ENCODE measurements at regions of chr12 and their contacts with region 1.

Region 1: GRCh38 chr12:91722072-91722471 is 423.6 kb downstream of the BTG1 start:
- DNase-seq: no peak
- H3K4me3 Mint-ChIP-seq: no peak overlapping the region
- H3K27ac Mint-ChIP-seq: no peak overlapping the region
- H3K4me1 Mint-ChIP-seq: peaks cover 5% of the 10 kb centered on the region
- H3K27me3 Mint-ChIP-seq: no peaks in the 10 kb centered on the region

Region 2: GRCh38 chr12:91687052-91688017 is 34.7 kb before region 1 on chr12:
- intact Hi-C with region 1: loop called (anchors 1 kb)
- DNase-seq: peak; percentile 2
- H3K4me3 Mint-ChIP-seq: peak overlapping the region; percentile 54
- H3K27ac Mint-ChIP-seq: peak overlapping the region; percentile 83
- H3K4me1 Mint-ChIP-seq: peaks cover 22% of the 10 kb centered on the region
- H3K27me3 Mint-ChIP-seq: no peaks in the 10 kb centered on the region